GM12878 (cell line): ENCODE measurements at regions of chr3 and their contacts with region 1.

Region 1: DNA sequence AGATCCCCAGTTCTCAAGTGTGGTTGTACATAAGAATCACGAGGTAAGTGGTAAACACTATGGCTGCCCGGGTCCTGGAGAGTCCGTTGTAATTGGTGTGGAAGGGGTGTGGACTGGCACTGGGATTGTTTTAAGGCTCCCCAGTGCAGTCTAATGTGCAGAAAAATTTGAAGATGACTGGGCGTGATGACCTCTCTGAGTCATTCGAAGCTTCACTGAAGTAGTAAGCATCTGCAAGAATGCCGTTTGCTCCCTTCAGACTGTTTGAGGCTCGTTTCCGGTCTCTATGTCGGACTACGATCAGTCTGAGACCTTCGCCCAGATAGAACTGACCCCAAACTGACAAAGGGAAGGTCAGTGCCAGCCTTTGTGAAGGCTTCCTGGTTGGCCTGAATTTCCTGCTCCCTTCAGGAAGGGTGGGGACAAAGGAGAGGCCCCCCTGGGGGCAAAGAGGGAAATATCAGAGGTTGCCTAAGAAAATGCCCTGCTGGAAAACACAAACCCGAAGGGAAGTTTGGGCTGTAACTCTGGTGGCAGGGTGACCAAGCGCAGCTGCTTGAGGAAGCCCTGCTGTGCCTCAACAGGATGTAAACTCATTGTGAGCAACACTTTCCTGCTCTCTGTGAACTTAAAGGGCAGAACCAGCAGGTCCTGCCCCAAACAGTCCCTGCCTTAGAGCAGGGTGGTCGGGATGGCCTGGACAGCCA is 34.6 kb downstream of the BTD start:
- DNase-seq: no peak
- ATAC-seq: peak; percentile 39
- H3K4me3 ChIP-seq: no peak overlapping the region
- H3K27ac ChIP-seq: peak overlapping the region; percentile 74
- H3K4me1 ChIP-seq: peaks cover 38% of the 10 kb centered on the region
- H3K27me3 ChIP-seq: no peaks in the 10 kb centered on the region
- CTCF ChIP-seq: no peak
- EP300 ChIP-seq: no peak
- POLR2A ChIP-seq: no peak
- RAD21 ChIP-seq: no peak

Region 2: GRCh38 chr3:15553749-15554148 is 82.4 kb before region 1 on chr3:
- CTCF ChIA-PET with region 1: no interaction called
- POLR2A ChIA-PET with region 1: no interaction called
- RAD21 ChIA-PET with region 1: no interaction called
- SMC1A ChIA-PET with region 1: no interaction called
- in situ Hi-C with region 1: no loop called
- intact Hi-C with region 1: no loop called
- DNase-seq: no peak
- ATAC-seq: no peak
- H3K4me3 ChIP-seq: no peak overlapping the region
- H3K27ac ChIP-seq: no peak overlapping the region
- H3K4me1 ChIP-seq: peaks cover 13% of the 10 kb centered on the region
- H3K27me3 ChIP-seq: no peaks in the 10 kb centered on the region
- CTCF ChIP-seq: no peak
- EP300 ChIP-seq: no peak
- POLR2A ChIP-seq: no peak
- RAD21 ChIP-seq: no peak

Region 3: DNA sequence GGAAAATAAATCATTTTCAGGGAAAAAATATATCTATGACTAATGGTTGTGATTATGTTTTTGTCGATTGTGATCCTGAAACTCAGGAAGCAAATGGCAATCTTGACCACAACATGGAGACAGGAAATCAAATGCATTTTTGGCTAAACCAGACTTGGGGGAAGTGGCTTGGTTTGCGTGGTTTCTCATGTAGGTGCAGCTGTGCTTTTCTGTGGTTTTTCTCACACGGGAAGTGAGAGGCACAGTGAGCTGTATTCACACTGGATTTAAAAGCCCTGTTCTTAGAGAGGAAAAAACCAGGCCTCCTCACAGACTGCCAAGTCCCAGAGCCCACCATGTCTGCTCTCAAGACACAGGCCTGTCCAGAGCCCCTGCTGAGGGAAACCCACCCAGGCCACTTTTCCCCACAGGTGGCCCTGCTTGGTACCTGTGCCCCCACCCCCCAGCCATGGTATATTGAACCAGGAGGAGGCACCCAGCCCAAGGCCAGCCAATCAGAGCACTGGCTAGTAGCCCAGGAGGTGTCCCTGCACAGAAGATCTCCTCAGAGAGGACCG is 11.5 kb after region 1 on chr3:
- CTCF ChIA-PET with region 1: interaction called, 35 read pairs
- POLR2A ChIA-PET with region 1: interaction called, 8 read pairs
- RAD21 ChIA-PET with region 1: interaction called, 22 read pairs
- SMC1A ChIA-PET with region 1: interaction called, 61 read pairs
- in situ Hi-C with region 1: no loop called
- intact Hi-C with region 1: no loop called
- DNase-seq: peak; percentile 94
- ATAC-seq: peak; percentile 96
- H3K4me3 ChIP-seq: peak overlapping the region; percentile 24
- H3K27ac ChIP-seq: peak overlapping the region; percentile 81
- H3K4me1 ChIP-seq: peaks cover 38% of the 10 kb centered on the region
- H3K27me3 ChIP-seq: no peaks in the 10 kb centered on the region
- CTCF ChIP-seq: no peak
- EP300 ChIP-seq: peak; percentile 87 to 95
- POLR2A ChIP-seq: peak; percentile 30; the same call in 1 of the 2 replicates
- RAD21 ChIP-seq: no peak

Region 4: DNA sequence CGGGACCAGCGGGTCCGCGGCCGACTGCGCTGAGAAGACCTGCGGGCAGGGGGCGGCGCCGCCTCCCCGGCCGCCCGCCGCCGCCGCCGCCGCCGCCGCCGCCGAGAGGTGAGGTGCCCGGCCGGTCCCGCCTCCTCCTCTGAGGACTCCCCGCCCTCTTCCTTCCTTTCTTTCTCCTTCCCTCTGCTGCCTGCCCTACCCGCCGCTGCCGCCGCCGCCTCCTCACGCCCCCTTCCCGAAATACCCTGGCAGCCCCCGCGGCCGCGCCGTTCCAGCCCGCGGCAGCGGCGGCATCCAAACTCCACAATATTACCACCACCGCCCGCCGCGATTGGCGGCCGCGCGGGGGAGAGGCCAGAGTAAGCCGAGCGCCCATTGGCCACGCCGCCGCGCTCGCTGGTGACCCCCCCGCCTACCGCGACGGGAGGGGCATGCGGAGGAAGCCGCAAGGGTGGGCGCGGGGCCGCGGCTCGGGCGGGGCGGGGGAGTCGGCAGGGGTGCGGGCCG is 223.4 kb after region 1 on chr3:
- CTCF ChIA-PET with region 1: interaction called, 3 read pairs
- POLR2A ChIA-PET with region 1: no interaction called
- RAD21 ChIA-PET with region 1: interaction called, 7 read pairs
- SMC1A ChIA-PET with region 1: interaction called, 5 read pairs
- in situ Hi-C with region 1: no loop called
- intact Hi-C with region 1: loop called (anchors 5 kb)
- DNase-seq: no peak
- ATAC-seq: peak; percentile 87
- H3K4me3 ChIP-seq: peak overlapping the region; percentile 86
- H3K27ac ChIP-seq: peak overlapping the region; percentile 78
- H3K4me1 ChIP-seq: 0 out of 2 replicates have a peak, but pooled peaks cover 3% of the 10 kb centered on the region
- H3K27me3 ChIP-seq: no peaks in the 10 kb centered on the region
- CTCF ChIP-seq: no peak
- EP300 ChIP-seq: no peak
- POLR2A ChIP-seq: peak; percentile 64
- RAD21 ChIP-seq: no peak